Activated B cell treated with CpG ODN at 0.5 μM for 24 hours (primary cell): ENCODE measurements at regions of chr1 and their contacts with region 1.

Region 1: DNA sequence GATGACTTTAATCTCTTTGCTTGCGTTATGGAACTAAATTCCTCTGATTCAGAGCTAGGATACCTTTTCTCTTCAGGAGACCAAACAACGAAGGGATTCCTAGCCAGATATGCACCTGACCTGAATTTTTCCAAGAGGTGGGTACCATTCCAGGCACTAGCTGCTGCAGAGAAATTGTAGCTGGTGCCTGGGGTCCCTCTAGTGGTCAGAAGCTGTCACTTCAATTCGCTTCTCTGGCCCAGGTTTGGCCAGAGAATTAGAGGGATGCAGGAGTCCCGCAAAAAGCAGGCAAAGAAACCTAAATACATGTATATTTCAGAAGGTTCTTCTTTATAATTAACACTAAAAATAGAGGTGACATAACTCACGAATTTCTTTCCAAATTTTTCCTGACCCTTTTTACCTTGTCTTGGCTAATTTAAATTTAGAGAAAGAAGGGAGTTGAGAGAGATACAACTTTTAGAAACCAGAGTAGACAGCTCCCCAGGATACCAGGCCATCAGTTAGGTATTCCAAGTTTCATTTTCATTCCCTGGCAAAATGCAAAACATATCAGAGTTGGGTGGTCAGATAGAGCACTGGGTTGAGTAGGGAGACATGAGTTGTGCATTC is 9.6 kb downstream of the ACKR1 start:
- DNase-seq: no peak
- ATAC-seq: peak; percentile 62
- H3K4me3 Mint-ChIP-seq: no peak overlapping the region
- H3K27ac Mint-ChIP-seq: no peak overlapping the region
- H3K4me1 Mint-ChIP-seq: peaks cover 2% of the 10 kb centered on the region
- H3K27me3 Mint-ChIP-seq: peaks cover 46% of the 10 kb centered on the region
- CTCF ChIP-seq: peak; percentile 82

Region 2: DNA sequence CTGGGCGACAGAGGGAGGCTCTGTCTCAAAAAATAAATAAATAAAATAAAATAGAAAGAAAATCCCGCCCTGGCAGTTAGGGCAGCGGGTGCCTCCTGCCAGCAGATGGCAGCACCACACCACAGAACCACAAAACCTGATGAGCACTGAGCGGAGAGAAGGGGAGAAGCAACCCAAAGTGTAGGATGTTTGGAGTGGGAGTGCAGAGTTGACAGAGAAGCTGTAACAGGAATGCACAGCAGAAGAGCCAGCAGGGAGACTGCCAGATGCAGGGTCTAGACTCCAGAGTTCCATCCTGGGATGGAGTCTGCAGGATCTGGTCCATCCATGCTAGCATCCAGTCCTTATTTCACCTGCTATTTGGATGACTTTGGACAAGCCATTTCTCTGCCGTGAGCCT is 1250.5 kb before region 1 on chr1:
- CTCF ChIA-PET with region 1: no interaction called
- POLR2A ChIA-PET with region 1: no interaction called
- intact Hi-C with region 1: loop called (anchors 5 kb)
- DNase-seq: peak; percentile 52
- ATAC-seq: peak; percentile 57
- H3K4me3 Mint-ChIP-seq: no peak overlapping the region
- H3K27ac Mint-ChIP-seq: no peak overlapping the region
- H3K4me1 Mint-ChIP-seq: no peaks in the 10 kb centered on the region
- H3K27me3 Mint-ChIP-seq: peaks cover 22% of the 10 kb centered on the region
- CTCF ChIP-seq: peak; percentile 80

Region 3: DNA sequence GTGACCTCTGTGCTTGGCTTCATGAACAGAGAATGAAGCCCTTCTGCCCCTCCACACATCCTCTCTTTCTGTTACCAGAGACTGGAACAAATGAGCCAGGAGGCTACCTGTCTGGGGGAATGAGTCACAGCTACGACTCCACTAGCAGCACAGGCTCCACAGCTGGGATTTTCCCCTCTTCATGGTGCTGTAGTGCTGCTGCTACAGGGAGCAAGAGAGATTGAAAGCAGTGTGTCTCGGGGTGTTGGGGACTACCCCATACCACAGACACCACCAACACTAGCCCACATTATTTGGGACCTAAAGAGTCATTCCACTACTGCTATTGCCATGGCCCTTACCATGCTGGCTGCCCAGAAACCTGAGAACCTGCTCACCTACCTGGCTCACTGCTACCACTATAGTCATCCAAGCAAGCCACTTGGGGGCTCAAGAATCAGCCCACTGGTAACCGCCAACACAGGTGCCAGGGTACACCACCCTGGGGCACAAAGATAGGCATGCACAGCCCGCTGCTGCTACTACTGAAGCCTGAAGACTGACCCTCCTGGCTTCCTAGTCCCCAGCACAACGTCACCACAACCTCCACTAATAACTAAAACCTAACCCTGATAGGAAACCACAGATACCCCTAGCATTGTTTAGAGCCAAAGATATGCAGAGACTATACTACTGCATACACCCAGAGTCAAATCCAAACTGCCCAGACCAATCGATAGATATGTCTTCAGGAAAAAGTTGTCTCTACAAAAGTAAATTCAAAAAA is 842.9 kb before region 1 on chr1:
- CTCF ChIA-PET with region 1: no interaction called
- POLR2A ChIA-PET with region 1: no interaction called
- intact Hi-C with region 1: no loop called
- DNase-seq: no peak
- ATAC-seq: peak; percentile 90
- H3K4me3 Mint-ChIP-seq: no peak overlapping the region
- H3K27ac Mint-ChIP-seq: no peak overlapping the region
- H3K4me1 Mint-ChIP-seq: peaks cover 8% of the 10 kb centered on the region
- H3K27me3 Mint-ChIP-seq: peaks cover under 1% of the 10 kb centered on the region
- CTCF ChIP-seq: no peak

Region 4: DNA sequence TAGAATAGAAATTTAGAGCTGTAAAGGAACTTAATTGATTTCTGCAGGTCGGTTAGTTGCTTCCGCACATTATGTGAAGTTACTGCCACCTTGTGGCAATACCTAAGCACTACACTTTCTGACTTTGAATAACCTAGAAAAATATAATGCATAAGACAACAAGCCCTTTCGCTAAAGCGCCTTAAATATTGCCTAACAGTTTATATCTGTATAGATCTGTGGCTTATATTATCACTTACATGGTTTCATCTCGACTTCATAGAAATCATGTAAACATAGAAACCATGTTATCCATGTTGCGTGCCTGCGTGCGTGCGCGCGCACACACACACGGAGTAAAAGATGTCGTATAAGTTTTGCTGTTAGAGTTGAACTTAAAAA is 215.5 kb before region 1 on chr1:
- CTCF ChIA-PET with region 1: no interaction called
- POLR2A ChIA-PET with region 1: no interaction called
- intact Hi-C with region 1: no loop called
- DNase-seq: no peak
- ATAC-seq: peak; percentile 83
- H3K4me3 Mint-ChIP-seq: no peak overlapping the region
- H3K27ac Mint-ChIP-seq: no peak overlapping the region
- H3K4me1 Mint-ChIP-seq: peaks cover 20% of the 10 kb centered on the region
- H3K27me3 Mint-ChIP-seq: no peaks in the 10 kb centered on the region
- CTCF ChIP-seq: peak; percentile 59

Region 5: DNA sequence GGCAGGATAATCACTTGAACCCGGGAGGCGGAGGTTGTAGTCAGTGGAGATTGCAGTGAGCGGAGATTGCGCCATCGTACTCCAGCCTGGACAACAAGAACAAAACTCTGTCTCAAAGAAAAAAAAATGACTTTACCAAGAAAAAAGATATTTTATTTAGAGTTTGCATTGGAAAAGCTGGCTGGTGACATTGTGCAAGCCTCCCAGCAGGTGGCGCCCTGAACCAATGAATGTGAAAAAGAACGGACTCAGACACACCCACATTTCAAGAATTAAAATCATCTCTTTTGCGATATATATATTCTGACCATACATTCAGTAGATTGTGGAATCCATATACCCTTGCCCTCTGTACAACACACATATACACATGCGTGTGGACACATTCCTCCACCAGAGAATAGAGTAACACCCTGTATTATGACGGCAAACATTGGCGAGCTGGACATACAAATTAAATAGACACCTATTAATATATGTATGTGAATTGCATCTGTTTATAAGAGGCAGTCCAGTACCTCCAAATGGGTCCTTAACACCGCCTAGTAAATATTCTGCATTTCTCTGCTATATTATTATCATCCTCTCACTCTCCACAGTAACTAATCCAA is 81.9 kb before region 1 on chr1:
- CTCF ChIA-PET with region 1: interaction called, 99 read pairs
- POLR2A ChIA-PET with region 1: interaction called, 4 read pairs
- intact Hi-C with region 1: loop called (anchors 1 kb)
- DNase-seq: peak; percentile 53
- ATAC-seq: peak; percentile 61
- H3K4me3 Mint-ChIP-seq: no peak overlapping the region
- H3K27ac Mint-ChIP-seq: no peak overlapping the region
- H3K4me1 Mint-ChIP-seq: peaks cover 2% of the 10 kb centered on the region
- H3K27me3 Mint-ChIP-seq: no peaks in the 10 kb centered on the region
- CTCF ChIP-seq: no peak

Region 6: DNA sequence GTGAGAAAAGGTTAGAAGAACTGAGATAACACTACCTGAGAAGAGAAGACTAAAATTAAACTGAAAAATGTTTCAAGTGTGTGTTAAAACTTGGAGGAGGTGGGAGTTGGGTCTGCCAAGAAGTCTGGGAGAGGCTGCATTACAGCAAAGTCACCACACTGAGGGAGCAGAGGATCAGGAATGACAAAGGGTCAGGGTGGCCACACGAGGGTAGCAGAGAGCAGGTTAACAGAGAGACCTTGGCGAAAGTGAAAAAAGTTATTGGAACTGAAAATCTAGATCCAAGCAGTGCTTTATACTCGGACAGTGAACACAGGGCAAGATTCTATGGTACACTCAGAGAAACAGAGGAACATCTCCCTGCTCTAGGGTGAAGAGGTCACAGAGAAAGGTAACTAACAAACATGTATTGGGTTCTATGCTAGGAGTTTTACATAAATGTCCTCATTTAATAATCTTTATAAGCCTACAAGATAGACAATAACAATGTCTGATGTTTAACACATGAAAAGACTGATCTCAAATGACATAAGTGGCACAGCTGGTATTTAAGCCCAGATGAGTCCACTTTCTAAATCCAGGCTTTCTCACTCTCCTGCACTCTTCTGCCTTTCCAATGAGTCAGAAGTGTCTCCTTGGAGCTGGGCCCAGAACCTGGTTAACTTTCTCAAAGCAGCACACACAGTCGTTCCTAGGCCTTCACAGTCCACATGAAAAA is 53.1 kb before region 1 on chr1:
- CTCF ChIA-PET with region 1: interaction called, 113 read pairs
- POLR2A ChIA-PET with region 1: no interaction called
- intact Hi-C with region 1: loop called (anchors 1 kb)
- DNase-seq: peak; percentile 49
- ATAC-seq: peak; percentile 98
- H3K4me3 Mint-ChIP-seq: no peak overlapping the region
- H3K27ac Mint-ChIP-seq: no peak overlapping the region
- H3K4me1 Mint-ChIP-seq: peaks cover 7% of the 10 kb centered on the region
- H3K27me3 Mint-ChIP-seq: no peaks in the 10 kb centered on the region
- CTCF ChIP-seq: peak; percentile 38

Region 7: DNA sequence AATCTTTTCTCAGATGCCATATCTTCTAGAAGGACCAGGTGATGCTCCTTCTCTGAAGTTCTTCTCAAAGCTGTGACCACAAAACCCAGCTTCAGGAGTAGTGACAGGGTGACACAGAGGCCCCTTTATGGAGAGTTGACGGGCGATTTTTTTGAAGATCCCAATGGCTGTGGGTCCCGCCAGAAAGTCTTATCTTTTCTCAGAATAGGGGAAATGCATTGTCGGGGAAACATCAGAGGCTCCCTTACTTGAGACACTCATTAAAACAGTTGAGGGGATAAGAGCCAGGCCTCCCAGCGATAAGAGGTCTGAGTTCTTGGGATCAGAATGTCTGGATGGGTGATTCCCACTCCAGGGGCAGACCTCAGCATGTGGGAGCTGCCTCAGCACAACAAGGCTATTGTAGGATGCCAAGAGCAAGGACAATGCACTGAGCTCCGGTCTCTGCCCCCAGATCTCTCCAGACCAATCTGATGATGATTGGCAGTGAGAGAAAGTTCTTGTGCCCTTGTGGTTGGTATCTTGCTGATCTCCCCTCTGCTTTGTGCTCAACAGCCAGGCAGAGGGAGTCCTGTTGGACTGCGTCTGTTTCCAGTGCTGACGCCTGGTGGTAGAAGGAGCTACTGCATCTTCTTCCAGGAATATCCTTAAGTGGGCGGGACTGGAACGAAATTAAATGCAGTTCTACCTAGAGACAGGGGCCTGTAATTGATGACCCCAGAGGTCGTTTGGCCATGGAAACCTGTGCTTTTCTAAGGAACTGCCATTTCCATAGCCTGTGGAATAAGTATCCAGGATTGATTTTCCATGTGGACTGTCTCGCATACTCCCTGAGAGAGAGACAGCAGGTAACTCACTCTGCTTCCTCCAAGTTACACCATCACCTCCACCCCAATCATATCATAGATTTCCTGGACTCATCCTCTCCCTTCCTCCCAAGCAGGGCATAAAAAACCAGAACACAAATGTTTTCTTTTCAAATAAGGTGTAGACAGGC is 16.4 kb before region 1 on chr1:
- CTCF ChIA-PET with region 1: interaction called, 16 read pairs
- POLR2A ChIA-PET with region 1: no interaction called
- intact Hi-C with region 1: no loop called
- DNase-seq: peak; percentile 37
- ATAC-seq: peak; percentile 94
- H3K4me3 Mint-ChIP-seq: no peak overlapping the region
- H3K27ac Mint-ChIP-seq: no peak overlapping the region
- H3K4me1 Mint-ChIP-seq: no peaks in the 10 kb centered on the region
- H3K27me3 Mint-ChIP-seq: peaks cover 26% of the 10 kb centered on the region
- CTCF ChIP-seq: no peak

Region 8: GRCh38 chr1:159229486-159229885 is 15.2 kb after region 1 on chr1:
- CTCF ChIA-PET with region 1: interaction called, 12 read pairs
- POLR2A ChIA-PET with region 1: no interaction called
- intact Hi-C with region 1: no loop called
- DNase-seq: no peak
- ATAC-seq: no peak
- H3K4me3 Mint-ChIP-seq: no peak overlapping the region
- H3K27ac Mint-ChIP-seq: no peak overlapping the region
- H3K4me1 Mint-ChIP-seq: no peaks in the 10 kb centered on the region
- H3K27me3 Mint-ChIP-seq: peaks cover 15% of the 10 kb centered on the region
- CTCF ChIP-seq: no peak

Region 9: DNA sequence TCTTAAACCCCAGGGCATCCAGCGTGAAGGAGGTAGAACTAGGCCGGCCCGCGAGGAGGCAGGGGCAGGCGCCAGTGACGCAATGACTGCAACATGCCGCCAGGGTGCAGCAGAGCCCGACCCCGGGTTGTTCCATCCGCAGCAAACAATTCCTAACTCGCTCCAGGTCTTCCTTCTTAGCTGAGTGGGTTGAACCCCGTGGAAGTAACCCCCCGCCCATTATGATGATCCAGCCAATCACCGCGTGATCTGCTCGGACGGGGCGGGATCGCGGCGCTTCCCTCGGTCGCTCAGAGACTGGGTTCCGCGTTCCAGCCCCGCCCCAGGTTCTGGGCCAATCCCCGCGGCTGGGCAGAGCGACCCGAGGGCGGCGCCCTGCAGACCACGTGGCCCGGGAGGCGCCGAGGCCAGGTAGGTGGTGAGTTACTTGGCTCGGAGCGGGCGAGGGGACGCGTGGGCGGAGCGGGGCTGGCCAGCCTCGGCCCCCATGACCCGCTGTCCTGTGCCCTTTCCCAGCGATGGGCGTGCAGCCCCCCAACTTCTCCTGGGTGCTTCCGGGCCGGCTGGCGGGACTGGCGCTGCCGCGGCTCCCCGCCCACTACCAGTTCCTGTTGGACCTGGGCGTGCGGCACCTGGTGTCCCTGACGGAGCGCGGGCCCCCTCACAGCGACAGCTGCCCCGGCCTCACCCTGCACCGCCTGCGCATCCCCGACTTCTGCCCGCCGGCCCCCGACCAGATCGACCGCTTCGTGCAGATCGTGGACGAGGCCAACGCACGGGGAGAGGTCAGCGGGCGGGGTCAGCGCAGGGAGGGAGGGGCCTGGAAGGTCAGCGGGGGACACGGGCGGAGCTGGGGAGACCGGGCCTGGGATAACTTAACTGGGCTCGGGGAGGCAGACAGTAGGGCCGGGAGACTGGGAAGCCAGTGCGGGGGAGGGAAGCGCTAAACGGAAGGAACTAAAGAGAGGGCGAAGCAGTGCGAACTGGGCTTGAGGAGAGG is 566.6 kb after region 1 on chr1 and contains the start of gene DUSP23:
- CTCF ChIA-PET with region 1: no interaction called
- POLR2A ChIA-PET with region 1: no interaction called
- intact Hi-C with region 1: loop called (anchors 5 kb)
- DNase-seq: peak; percentile 93
- ATAC-seq: peak; percentile 98
- H3K4me3 Mint-ChIP-seq: peak within 1 kb of the TSS; percentile 83
- H3K27ac Mint-ChIP-seq: peak within 1 kb of the TSS; percentile 68
- H3K4me1 Mint-ChIP-seq: peaks cover 12% of the 10 kb centered on the region
- H3K27me3 Mint-ChIP-seq: peaks cover 3% of the 10 kb centered on the region
- CTCF ChIP-seq: no peak
- total RNA-seq, gene DUSP23: 15.5 and 15.7 TPM in 2 replicates